Thyroid gland (tissue), 4 donors: ENCODE measurements at regions of chr14 and their contacts with region 1.

Region 1: GRCh38 chr14:93939304-93940229 is 12.4 kb downstream of the FAM181A start:
- DNase-seq: peak; percentile 64 to 69
- H3K4me3 ChIP-seq: peak overlapping the region in 1 of 3 donors; percentile 10
- H3K27ac ChIP-seq: no peak overlapping the region
- H3K4me1 ChIP-seq: peaks cover 7 to 10% of the 10 kb centered on the region in 2 donors
- H3K27me3 ChIP-seq: no peaks in the 10 kb centered on the region
- CTCF ChIP-seq: peak in 5 of 6 experiments; percentile 39 to 73 (median 58)
- POLR2A ChIP-seq: no peak

Region 2: DNA sequence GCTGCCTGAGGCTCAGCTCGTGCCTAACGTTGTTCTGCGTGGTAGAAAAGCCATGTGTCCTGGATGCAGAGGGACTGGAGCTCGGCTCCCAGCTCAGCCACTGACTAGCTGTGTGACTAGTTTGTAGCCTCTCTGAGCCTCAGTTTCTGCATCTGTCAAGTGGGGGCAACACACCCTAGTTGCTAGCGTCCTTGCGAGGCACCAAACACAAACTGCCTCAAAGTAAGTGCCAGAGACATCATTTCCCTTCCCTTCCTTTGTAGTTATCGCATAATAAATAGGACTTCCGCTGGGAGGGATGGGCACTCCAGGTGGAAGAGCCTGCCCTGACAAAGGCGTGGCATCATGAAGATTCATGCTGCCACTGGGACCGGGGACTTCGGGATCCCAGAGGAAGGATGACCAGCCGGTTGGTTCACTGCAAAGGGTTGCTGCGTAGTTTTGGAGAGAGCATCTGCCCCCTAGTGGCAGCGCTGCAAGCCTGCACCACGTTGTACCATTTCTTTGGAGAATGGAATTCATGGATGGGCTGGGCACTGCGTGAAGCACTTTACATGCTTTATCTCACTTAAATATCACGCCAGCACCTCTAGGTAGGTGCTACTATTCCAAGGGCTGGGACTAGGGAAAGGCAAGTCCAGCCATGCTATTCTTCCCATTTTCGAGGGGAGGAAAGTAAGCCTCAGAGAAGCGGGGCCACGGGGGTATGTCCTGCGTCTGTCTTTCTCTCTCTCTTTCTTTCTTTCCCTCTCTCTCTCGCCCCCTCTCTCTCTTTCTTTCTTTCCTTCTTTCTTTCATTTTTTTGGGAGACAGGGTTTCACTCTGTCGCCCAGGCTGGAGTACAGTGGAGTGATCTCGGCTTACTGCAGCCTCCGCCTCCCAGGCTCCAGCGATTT is 62.2 kb after region 1 on chr14:
- intact Hi-C with region 1: loop called (anchors 2 kb)
- DNase-seq: peak; percentile 35 to 49
- H3K4me3 ChIP-seq: no peak overlapping the region
- H3K27ac ChIP-seq: no peak overlapping the region
- H3K4me1 ChIP-seq: peaks cover 0 to 4% of the 10 kb centered on the region in 2 donors
- H3K27me3 ChIP-seq: no peaks in the 10 kb centered on the region
- CTCF ChIP-seq: peak; percentile 71 to 99 (median 80)
- POLR2A ChIP-seq: no peak

Region 3: GRCh38 chr14:94136575-94137331 is 197.2 kb after region 1 on chr14:
- intact Hi-C with region 1: loop called (anchors 10 kb)
- DNase-seq: peak; percentile 86 to 88
- H3K4me3 ChIP-seq: no peak overlapping the region
- H3K27ac ChIP-seq: no peak overlapping the region
- H3K4me1 ChIP-seq: no peaks in the 10 kb centered on the region
- H3K27me3 ChIP-seq: no peaks in the 10 kb centered on the region
- CTCF ChIP-seq: peak; percentile 85 to 97 (median 92)
- POLR2A ChIP-seq: no peak